Mammary epithelial cell (primary cell): ENCODE measurements at regions of chr5 and their contacts with region 1.

Region 1: GRCh38 chr5:20572614-20573013 is 584.6 kb upstream of the CDH18 start:
- DNase-seq: peak; percentile 89
- H3K4me3 ChIP-seq: no peak overlapping the region
- H3K27ac ChIP-seq: peak overlapping the region; percentile 25
- H3K4me1 ChIP-seq: peaks cover 9% of the 10 kb centered on the region
- H3K27me3 ChIP-seq: no peaks in the 10 kb centered on the region
- CTCF ChIP-seq: peak; percentile 21 to 45

Region 2: DNA sequence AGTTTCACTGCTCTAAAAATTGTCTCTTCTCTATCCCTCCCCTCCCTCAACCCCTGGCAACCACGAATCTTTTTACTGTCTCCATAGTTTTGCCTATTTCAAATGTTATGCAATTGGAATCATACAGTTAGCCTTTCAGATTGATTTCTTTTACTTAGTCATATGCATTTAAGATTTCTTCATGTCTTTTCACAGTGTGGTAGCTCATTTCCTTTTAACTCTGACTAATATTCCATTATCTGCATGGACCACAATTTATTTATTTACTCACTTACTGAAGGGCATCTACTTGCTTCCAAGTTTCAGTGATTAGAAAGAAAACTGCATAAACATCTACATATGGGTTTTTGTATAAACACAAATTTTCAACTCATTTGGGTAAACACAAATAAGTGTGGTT is 957.0 kb before region 1 on chr5:
- CTCF ChIA-PET with region 1: no interaction called
- dilution Hi-C with region 1: no loop called
- in situ Hi-C with region 1: no loop called
- intact Hi-C with region 1: loop called (anchors 10 kb)
- DNase-seq: peak; percentile 20
- H3K4me3 ChIP-seq: no peak overlapping the region
- H3K27ac ChIP-seq: no peak overlapping the region
- H3K4me1 ChIP-seq: no peaks in the 10 kb centered on the region
- H3K27me3 ChIP-seq: no peaks in the 10 kb centered on the region
- CTCF ChIP-seq: no peak

Region 3: GRCh38 chr5:19795218-19795617 is 777.4 kb before region 1 on chr5:
- CTCF ChIA-PET with region 1: no interaction called
- dilution Hi-C with region 1: no loop called
- in situ Hi-C with region 1: no loop called
- intact Hi-C with region 1: loop called (anchors 10 kb)
- DNase-seq: peak; percentile 34
- H3K4me3 ChIP-seq: no peak overlapping the region
- H3K27ac ChIP-seq: no peak overlapping the region
- H3K4me1 ChIP-seq: no peaks in the 10 kb centered on the region
- H3K27me3 ChIP-seq: no peaks in the 10 kb centered on the region
- CTCF ChIP-seq: peak; percentile 50 to 64

Region 4: DNA sequence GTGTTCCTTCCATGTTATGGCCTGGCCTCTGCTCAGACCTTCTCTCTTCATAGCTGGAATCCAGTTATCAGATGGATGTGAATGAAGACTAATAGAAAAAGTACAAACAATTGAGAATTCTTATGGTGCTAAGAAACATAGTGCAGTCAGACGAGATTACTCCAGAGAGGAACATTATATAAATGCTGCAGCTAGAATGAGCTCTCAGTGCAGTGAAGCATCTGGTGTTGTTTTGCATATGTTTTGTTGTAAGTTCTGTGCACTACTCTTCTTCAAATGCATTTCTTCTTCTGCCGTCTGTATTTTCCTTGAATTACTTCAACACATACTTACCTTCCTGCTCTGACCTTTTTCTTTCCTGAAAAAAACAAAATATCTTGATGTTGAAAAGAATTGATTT is 17.7 kb after region 1 on chr5:
- CTCF ChIA-PET with region 1: no interaction called
- dilution Hi-C with region 1: no loop called
- in situ Hi-C with region 1: no loop called
- intact Hi-C with region 1: no loop called
- DNase-seq: no peak
- H3K4me3 ChIP-seq: no peak overlapping the region
- H3K27ac ChIP-seq: no peak overlapping the region
- H3K4me1 ChIP-seq: no peaks in the 10 kb centered on the region
- H3K27me3 ChIP-seq: no peaks in the 10 kb centered on the region
- CTCF ChIP-seq: no peak